H1 (cell line): ENCODE measurements at regions of chr17 and their contacts with region 1.

Region 1: DNA sequence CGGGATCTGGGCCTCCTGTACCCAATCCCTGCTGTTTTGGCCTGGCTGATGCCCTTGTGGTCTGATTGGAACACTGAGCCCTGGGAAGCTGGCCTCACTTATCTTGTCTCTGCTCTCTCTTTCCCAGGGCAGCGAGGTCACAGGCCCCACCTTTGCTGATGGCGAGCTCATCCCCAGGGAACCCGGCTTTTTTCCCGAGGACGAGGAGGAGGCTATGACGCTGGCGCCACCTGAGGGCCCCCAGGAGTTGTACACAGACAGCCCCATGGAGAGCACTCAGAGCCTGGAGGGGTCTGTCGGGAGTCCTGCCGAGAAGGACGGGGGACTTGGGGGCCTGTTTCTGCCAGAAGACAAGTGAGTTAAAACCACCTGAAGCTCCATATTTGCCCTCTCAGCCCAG is 126.0 kb downstream of the RAB11FIP4 start:
- DNase-seq: peak in 1 of 2 experiments; percentile 73
- H3K4me3 ChIP-seq: no peak overlapping the region
- H3K27ac ChIP-seq: no peak overlapping the region
- H3K4me1 ChIP-seq: peaks cover 0 to 4% (median 1%) of the 10 kb centered on the region in 4 experiments; a peak in 3 of 7 replicates
- H3K27me3 ChIP-seq: no peaks in the 10 kb centered on the region
- CTCF ChIP-seq: peak; percentile 57 to 71 (median 69)
- EP300 ChIP-seq: no peak
- POLR2A ChIP-seq: no peak
- RAD21 ChIP-seq: peak; percentile 82 to 91

Region 2: GRCh38 chr17:31442268-31442667 is 75.3 kb before region 1 on chr17:
- CTCF ChIA-PET with region 1: interaction called, 325 read pairs
- POLR2A ChIA-PET with region 1: interaction called, 3 read pairs
- DNase-seq: no peak
- H3K4me3 ChIP-seq: no peak overlapping the region
- H3K27ac ChIP-seq: no peak overlapping the region
- H3K4me1 ChIP-seq: no peaks in the 10 kb centered on the region
- H3K27me3 ChIP-seq: no peaks in the 10 kb centered on the region
- CTCF ChIP-seq: no peak
- EP300 ChIP-seq: no peak
- POLR2A ChIP-seq: no peak
- RAD21 ChIP-seq: no peak

Region 3: DNA sequence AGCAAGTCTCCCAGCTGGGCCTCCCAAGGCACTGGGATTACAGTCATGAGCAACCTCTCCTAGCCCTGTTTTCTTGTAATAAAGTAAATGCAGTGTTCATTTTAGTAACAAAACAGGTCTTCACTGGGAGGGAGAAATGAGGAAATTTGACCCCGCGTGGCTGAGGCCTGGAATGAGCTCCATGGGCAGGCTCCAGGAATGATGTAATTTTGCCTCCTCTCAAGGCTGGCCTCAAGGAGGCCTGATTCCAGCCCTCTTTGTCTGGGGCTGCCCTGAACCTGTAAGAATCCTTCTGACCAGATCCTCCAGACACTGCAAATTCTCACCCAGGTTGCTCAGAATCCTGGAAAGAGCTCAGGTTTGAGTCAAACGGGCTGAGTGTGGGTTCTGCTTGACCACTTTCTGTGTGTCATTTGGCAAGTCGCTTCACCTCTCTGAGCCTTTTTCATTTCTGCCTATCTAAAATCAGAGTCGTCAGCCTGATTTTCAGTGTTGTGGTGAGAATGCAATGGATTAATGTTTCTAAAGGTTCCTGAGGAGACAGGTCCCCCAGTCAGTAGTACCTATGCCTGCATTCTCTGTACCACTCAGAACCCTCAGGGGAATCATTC is 69.0 kb before region 1 on chr17:
- CTCF ChIA-PET with region 1: interaction called, 325 read pairs
- POLR2A ChIA-PET with region 1: interaction called, 3 read pairs
- DNase-seq: no peak
- H3K4me3 ChIP-seq: no peak overlapping the region
- H3K27ac ChIP-seq: no peak overlapping the region
- H3K4me1 ChIP-seq: peaks cover 0 to 9% (median under 1%) of the 10 kb centered on the region in 4 experiments; a peak in 2 of 7 replicates
- H3K27me3 ChIP-seq: no peaks in the 10 kb centered on the region
- CTCF ChIP-seq: no peak
- EP300 ChIP-seq: no peak
- POLR2A ChIP-seq: no peak
- RAD21 ChIP-seq: no peak

Region 4: GRCh38 chr17:31499771-31500554 is 17.6 kb before region 1 on chr17:
- CTCF ChIA-PET with region 1: interaction called, 33 read pairs
- POLR2A ChIA-PET with region 1: interaction called, 5 read pairs
- DNase-seq: peak in 1 of 2 experiments; percentile 58
- H3K4me3 ChIP-seq: peak overlapping the region in 1 of 4 experiments; percentile 0; a peak in 2 of 8 replicates
- H3K27ac ChIP-seq: peak overlapping the region; percentile 43; the same call in 1 of the 2 replicates
- H3K4me1 ChIP-seq: peaks cover 16 to 35% (median 22%) of the 10 kb centered on the region in 4 experiments
- H3K27me3 ChIP-seq: no peaks in the 10 kb centered on the region
- CTCF ChIP-seq: no peak
- EP300 ChIP-seq: no peak
- POLR2A ChIP-seq: no peak
- RAD21 ChIP-seq: no peak; a peak in 1 of 4 replicates

Region 5: GRCh38 chr17:31702041-31702440 is 184.5 kb after region 1 on chr17:
- CTCF ChIA-PET with region 1: no interaction called
- POLR2A ChIA-PET with region 1: no interaction called
- DNase-seq: no peak
- H3K4me3 ChIP-seq: no peak overlapping the region
- H3K27ac ChIP-seq: no peak overlapping the region
- H3K4me1 ChIP-seq: no peaks in the 10 kb centered on the region
- H3K27me3 ChIP-seq: no peaks in the 10 kb centered on the region
- CTCF ChIP-seq: no peak
- EP300 ChIP-seq: no peak
- POLR2A ChIP-seq: no peak
- RAD21 ChIP-seq: no peak